Endothelial cell of umbilical vein (primary cell): ENCODE measurements at regions of chr2 and their contacts with region 1.

Region 1: DNA sequence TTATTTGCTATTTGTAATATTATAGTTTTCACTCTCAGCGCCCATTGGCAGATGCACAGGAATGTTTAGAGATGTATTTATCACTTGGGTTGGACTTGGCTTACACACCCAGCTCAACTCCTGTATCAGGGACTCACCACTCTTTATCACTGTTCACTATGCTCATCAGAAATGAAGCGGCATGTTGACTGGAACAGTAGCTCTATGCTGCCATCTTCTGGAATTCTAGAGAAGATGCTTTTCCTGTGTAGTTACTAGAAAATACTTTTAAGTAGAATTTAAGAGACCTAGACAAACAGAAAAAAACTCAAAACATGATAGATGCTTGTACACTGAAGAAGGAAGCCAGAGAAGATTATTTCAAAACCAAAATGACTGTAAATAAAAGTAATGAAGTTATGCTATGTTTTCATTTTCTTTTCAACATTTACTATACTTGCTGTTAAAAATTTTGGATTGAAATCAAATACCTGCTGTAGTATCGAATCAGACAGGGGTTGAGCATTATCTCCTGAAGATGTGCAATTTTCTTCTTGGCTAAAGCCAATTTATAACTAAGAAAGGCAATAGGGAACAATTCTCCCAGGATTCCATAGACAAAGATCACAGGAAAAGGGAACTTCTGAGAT is 47.4 kb upstream of the NXPH2 start:
- DNase-seq: peak; percentile 66
- H3K4me3 ChIP-seq: no peak overlapping the region
- H3K27ac ChIP-seq: no peak overlapping the region
- H3K4me1 ChIP-seq: no peaks in the 10 kb centered on the region
- H3K27me3 ChIP-seq: no peaks in the 10 kb centered on the region
- CTCF ChIP-seq: peak; percentile 33 to 52
- POLR2A ChIP-seq: no peak

Region 2: GRCh38 chr2:137865954-137866540 is 961.5 kb before region 1 on chr2:
- CTCF ChIA-PET with region 1: interaction called, 121 read pairs
- POLR2A ChIA-PET with region 1: no interaction called
- dilution Hi-C with region 1: no loop called
- intact Hi-C with region 1: loop called (anchors 1 kb)
- DNase-seq: peak; percentile 53
- H3K4me3 ChIP-seq: no peak overlapping the region
- H3K27ac ChIP-seq: no peak overlapping the region
- H3K4me1 ChIP-seq: no peaks in the 10 kb centered on the region
- H3K27me3 ChIP-seq: peaks cover 0 to 3% of the 10 kb centered on the region in 2 experiments
- CTCF ChIP-seq: peak; percentile 57 to 63
- POLR2A ChIP-seq: no peak

Region 3: GRCh38 chr2:137910641-137911040 is 916.9 kb before region 1 on chr2:
- CTCF ChIA-PET with region 1: interaction called, 123 read pairs
- POLR2A ChIA-PET with region 1: no interaction called
- dilution Hi-C with region 1: no loop called
- intact Hi-C with region 1: loop called (anchors 1 kb)
- DNase-seq: peak; percentile 52
- H3K4me3 ChIP-seq: no peak overlapping the region
- H3K27ac ChIP-seq: no peak overlapping the region
- H3K4me1 ChIP-seq: peaks cover 4% of the 10 kb centered on the region
- H3K27me3 ChIP-seq: peaks cover 0 to 3% of the 10 kb centered on the region in 2 experiments
- CTCF ChIP-seq: peak; percentile 26
- POLR2A ChIP-seq: no peak

Region 4: GRCh38 chr2:138090330-138090729 is 737.2 kb before region 1 on chr2:
- CTCF ChIA-PET with region 1: interaction called, 13 read pairs
- POLR2A ChIA-PET with region 1: no interaction called
- dilution Hi-C with region 1: no loop called
- intact Hi-C with region 1: loop called (anchors 5 kb)
- DNase-seq: peak; percentile 76
- H3K4me3 ChIP-seq: no peak overlapping the region
- H3K27ac ChIP-seq: no peak overlapping the region
- H3K4me1 ChIP-seq: no peaks in the 10 kb centered on the region
- H3K27me3 ChIP-seq: no peaks in the 10 kb centered on the region
- CTCF ChIP-seq: peak; percentile 53 to 70
- POLR2A ChIP-seq: no peak

Region 5: GRCh38 chr2:138846223-138846821 is 18.8 kb after region 1 on chr2:
- CTCF ChIA-PET with region 1: interaction called, 20 read pairs
- POLR2A ChIA-PET with region 1: no interaction called
- dilution Hi-C with region 1: no loop called
- intact Hi-C with region 1: no loop called
- DNase-seq: peak; percentile 41
- H3K4me3 ChIP-seq: no peak overlapping the region
- H3K27ac ChIP-seq: no peak overlapping the region
- H3K4me1 ChIP-seq: no peaks in the 10 kb centered on the region
- H3K27me3 ChIP-seq: no peaks in the 10 kb centered on the region
- CTCF ChIP-seq: peak; percentile 45 to 49
- POLR2A ChIP-seq: no peak